ENCODE measurements at regions of chr22 and their contacts with region 1.

Region 1: DNA sequence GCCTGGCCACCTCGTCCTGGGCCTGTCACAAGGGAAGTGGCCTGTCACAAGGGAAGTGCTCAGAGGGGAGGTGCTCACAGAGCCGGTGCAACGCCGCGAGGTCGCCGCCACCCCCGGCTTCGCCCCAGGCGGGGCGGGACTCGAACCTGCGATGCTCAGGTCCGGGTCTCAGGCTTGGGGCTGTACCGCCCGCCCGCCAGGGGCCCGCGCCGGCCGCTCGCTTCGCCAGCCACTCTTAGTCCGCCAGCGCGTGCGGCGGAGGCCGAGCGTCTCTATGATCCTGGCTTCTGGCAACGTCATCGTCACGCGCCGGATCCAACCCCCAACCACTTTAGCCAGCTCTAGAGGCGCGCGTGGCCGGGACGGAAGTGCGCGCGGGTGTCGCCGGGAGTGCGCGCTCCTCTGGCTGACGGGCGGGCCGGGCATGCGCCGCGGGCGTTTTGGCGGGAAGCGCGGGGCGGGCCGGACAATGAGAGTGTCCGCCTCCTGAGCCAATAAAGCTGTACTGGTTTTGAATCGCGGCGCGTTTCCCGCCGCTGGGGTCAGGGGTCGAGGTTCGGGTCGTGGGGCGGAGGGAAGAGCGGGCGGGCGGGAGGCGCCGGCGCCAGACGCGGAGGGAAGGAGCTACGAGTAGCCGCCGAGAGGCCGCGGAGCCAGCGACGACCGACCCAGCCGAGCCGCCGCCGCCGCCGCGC is at the start of gene TRMT2A:
- DNase-seq: peak; percentile 97
- H3K4me3 Mint-ChIP-seq: peak within 1 kb of the TSS; percentile 97
- H3K27ac Mint-ChIP-seq: peak within 1 kb of the TSS; percentile 96
- H3K4me1 Mint-ChIP-seq: peaks cover 30% of the 10 kb centered on the region
- H3K27me3 Mint-ChIP-seq: peaks cover 3% of the 10 kb centered on the region
- total RNA-seq, gene TRMT2A: 142 and 161 TPM in 2 replicates

Region 2: GRCh38 chr22:20079745-20080444 is 37.2 kb before region 1 on chr22 and contains the start of gene DGCR8:
- intact Hi-C with region 1: loop called (anchors 1 kb)
- DNase-seq: peak; percentile 74
- H3K4me3 Mint-ChIP-seq: peak within 1 kb of the TSS; percentile 86
- H3K27ac Mint-ChIP-seq: peak within 1 kb of the TSS; percentile 82
- H3K4me1 Mint-ChIP-seq: peaks cover 40% of the 10 kb centered on the region
- H3K27me3 Mint-ChIP-seq: no peaks in the 10 kb centered on the region
- total RNA-seq, gene DGCR8: 79.3 and 81.0 TPM in 2 replicates

Region 3: GRCh38 chr22:20102203-20102780 is 14.8 kb before region 1 on chr22:
- intact Hi-C with region 1: loop called (anchors 1 kb)
- DNase-seq: no peak
- H3K4me3 Mint-ChIP-seq: peak overlapping the region; percentile 54
- H3K27ac Mint-ChIP-seq: peak overlapping the region; percentile 80
- H3K4me1 Mint-ChIP-seq: peaks cover 62% of the 10 kb centered on the region
- H3K27me3 Mint-ChIP-seq: no peaks in the 10 kb centered on the region

Region 4: DNA sequence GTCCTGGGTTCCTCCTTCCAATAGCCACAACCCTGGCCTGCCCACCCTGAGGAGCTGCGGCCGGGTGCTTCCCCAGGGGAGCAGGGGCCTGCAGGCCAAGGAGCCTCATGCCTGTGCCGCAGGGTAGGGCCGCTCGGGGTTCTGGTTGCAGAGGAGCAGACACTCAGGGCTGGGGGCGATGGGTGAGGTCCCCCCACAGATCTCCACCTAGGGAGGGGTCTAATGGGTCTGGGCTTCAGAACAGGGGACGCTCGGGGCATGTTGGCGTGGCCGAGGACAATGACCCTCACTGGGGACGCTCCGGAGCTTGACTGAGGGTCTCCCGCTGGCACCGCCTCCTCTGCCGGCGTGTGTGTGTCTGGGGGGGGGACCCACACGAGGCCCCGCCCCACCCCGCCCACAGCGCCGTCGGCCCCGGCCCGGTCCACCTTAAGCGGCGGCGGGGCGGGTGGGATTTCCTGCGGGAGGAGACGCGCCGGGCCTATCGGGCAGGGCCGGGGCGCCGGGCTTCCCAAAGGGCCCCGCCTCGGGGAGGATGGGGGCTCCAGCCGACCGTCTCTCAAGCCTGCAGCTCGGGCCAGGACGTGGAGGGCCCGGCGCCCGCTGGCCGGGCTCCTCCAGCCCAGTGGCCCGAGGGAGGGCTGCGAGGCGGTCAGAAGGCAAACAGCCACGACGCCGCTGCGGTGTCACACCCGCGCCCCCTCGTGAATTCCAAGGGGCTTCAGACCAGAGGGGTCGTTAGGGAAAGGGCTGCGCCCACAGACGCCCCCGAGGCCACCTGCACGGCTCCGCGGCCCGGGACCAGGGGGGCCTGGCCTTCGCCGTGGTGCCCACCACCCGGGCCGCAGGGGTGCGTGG is 13.9 kb after region 1 on chr22:
- intact Hi-C with region 1: loop called (anchors 1 kb)
- DNase-seq: peak; percentile 67
- H3K4me3 Mint-ChIP-seq: peak overlapping the region; percentile 59
- H3K27ac Mint-ChIP-seq: peak overlapping the region; percentile 61
- H3K4me1 Mint-ChIP-seq: peaks cover 10% of the 10 kb centered on the region
- H3K27me3 Mint-ChIP-seq: no peaks in the 10 kb centered on the region

Region 5: GRCh38 chr22:20319745-20320658 is 202.9 kb after region 1 on chr22 and contains the start of gene DGCR6L:
- intact Hi-C with region 1: loop called (anchors 1 kb)
- DNase-seq: peak; percentile 97
- H3K4me3 Mint-ChIP-seq: peak within 1 kb of the TSS; percentile 92
- H3K27ac Mint-ChIP-seq: peak within 1 kb of the TSS; percentile 86
- H3K4me1 Mint-ChIP-seq: peaks cover 62% of the 10 kb centered on the region
- H3K27me3 Mint-ChIP-seq: no peaks in the 10 kb centered on the region
- total RNA-seq, gene DGCR6L: 35.5 and 40.6 TPM in 2 replicates

Region 6: GRCh38 chr22:20430720-20431510 is 313.8 kb after region 1 on chr22:
- intact Hi-C with region 1: no loop called
- DNase-seq: peak; percentile 29
- H3K4me3 Mint-ChIP-seq: peak overlapping the region; percentile 42
- H3K27ac Mint-ChIP-seq: no peak overlapping the region
- H3K4me1 Mint-ChIP-seq: peaks cover 6% of the 10 kb centered on the region
- H3K27me3 Mint-ChIP-seq: peaks cover 60% of the 10 kb centered on the region

Measured in activated T-helper 1 cell treated with anti-CD3 and anti-CD28 coated beads, Interleukin-12 subunit alpha, Interleukin-12 subunit beta, Interleukin-2, Interleukin-4 antibody, amounts not matched to agents 30 ng/mL and 10 ng/mL and 1 ng/mL, durations not matched to agents 14 hours and 24 hours and 36 hours (primary cell).